CD4-positive, alpha-beta memory T cell (primary cell): ENCODE measurements at regions of chr15 and their contacts with region 1.

Region 1: GRCh38 chr15:55846116-55846707 is 103.3 kb upstream of the PRTG start:
- DNase-seq: peak; percentile 50 to 61 (median 56)
- H3K4me3 ChIP-seq: no peak overlapping the region
- H3K4me3 Mint-ChIP-seq: no peak overlapping the region
- H3K27ac ChIP-seq: no peak overlapping the region
- H3K27ac Mint-ChIP-seq: no peak overlapping the region
- H3K4me1 ChIP-seq: no peaks in the 10 kb centered on the region
- H3K4me1 Mint-ChIP-seq: peaks cover 0 to 4% (median 2%) of the 10 kb centered on the region in 4 donors
- H3K27me3 ChIP-seq: no peaks in the 10 kb centered on the region
- H3K27me3 Mint-ChIP-seq: no peaks in the 10 kb centered on the region

Region 2: GRCh38 chr15:55649054-55649423 is 197.2 kb before region 1 on chr15:
- CTCF ChIA-PET with region 1: interaction called, 10 read pairs
- POLR2A ChIA-PET with region 1: no interaction called
- intact Hi-C with region 1: loop called (anchors 1 kb)
- DNase-seq: no peak
- H3K4me3 ChIP-seq: no peak overlapping the region
- H3K4me3 Mint-ChIP-seq: no peak overlapping the region
- H3K27ac ChIP-seq: no peak overlapping the region
- H3K27ac Mint-ChIP-seq: no peak overlapping the region
- H3K4me1 ChIP-seq: no peaks in the 10 kb centered on the region
- H3K4me1 Mint-ChIP-seq: no peaks in the 10 kb centered on the region
- H3K27me3 ChIP-seq: no peaks in the 10 kb centered on the region
- H3K27me3 Mint-ChIP-seq: no peaks in the 10 kb centered on the region

Region 3: DNA sequence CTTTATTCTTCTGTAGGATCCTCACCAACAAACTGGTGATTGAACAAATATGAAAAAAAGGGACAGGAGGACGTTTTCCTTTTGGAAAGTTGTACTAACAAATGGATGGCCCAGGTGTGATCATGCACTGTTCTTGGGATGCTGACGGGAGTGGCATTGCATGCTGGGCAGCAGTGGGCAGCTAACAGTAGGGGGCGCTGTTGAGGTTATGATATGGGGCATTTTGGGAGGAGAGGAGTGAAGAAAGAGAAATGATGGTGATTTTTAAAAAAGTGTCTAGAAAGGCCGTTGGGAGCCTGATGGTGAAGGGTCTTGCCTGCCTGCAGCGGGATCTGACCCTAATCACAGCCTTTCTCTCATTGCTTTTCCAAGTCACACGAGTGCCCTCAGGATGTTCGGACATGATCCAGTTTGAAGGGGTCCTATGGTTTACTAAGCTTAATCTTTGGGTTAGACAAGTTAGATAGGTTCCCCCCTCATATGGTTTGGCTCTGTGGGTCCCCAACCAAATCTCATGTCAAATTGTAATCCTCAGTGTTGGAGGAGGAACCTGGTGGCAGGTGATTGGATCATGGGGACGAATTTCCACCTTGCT is 57.0 kb before region 1 on chr15:
- CTCF ChIA-PET with region 1: interaction called, 4 read pairs
- POLR2A ChIA-PET with region 1: no interaction called
- intact Hi-C with region 1: loop called (anchors 5 kb)
- DNase-seq: peak in 4 of 5 donors; percentile 9 to 37 (median 22)
- H3K4me3 ChIP-seq: no peak overlapping the region
- H3K4me3 Mint-ChIP-seq: no peak overlapping the region
- H3K27ac ChIP-seq: no peak overlapping the region
- H3K27ac Mint-ChIP-seq: no peak overlapping the region
- H3K4me1 ChIP-seq: no peaks in the 10 kb centered on the region
- H3K4me1 Mint-ChIP-seq: no peaks in the 10 kb centered on the region
- H3K27me3 ChIP-seq: no peaks in the 10 kb centered on the region
- H3K27me3 Mint-ChIP-seq: peaks cover 10 to 16% of the 10 kb centered on the region in 2 donors

Region 4: GRCh38 chr15:57118013-57118799 is 1272.0 kb after region 1 on chr15:
- CTCF ChIA-PET with region 1: no interaction called
- POLR2A ChIA-PET with region 1: no interaction called
- intact Hi-C with region 1: loop called (anchors 10 kb)
- DNase-seq: no peak
- H3K4me3 ChIP-seq: no peak overlapping the region
- H3K4me3 Mint-ChIP-seq: no peak overlapping the region
- H3K27ac ChIP-seq: no peak overlapping the region
- H3K27ac Mint-ChIP-seq: peak overlapping the region in 1 of 7 donors; percentile 76
- H3K4me1 ChIP-seq: no peaks in the 10 kb centered on the region
- H3K4me1 Mint-ChIP-seq: peaks cover 5 to 17% (median 9%) of the 10 kb centered on the region in 4 donors
- H3K27me3 ChIP-seq: no peaks in the 10 kb centered on the region
- H3K27me3 Mint-ChIP-seq: no peaks in the 10 kb centered on the region